Mucosa of descending colon (tissue), 3 donors: ENCODE measurements at regions of chr15 and their contacts with region 1.

Region 1: DNA sequence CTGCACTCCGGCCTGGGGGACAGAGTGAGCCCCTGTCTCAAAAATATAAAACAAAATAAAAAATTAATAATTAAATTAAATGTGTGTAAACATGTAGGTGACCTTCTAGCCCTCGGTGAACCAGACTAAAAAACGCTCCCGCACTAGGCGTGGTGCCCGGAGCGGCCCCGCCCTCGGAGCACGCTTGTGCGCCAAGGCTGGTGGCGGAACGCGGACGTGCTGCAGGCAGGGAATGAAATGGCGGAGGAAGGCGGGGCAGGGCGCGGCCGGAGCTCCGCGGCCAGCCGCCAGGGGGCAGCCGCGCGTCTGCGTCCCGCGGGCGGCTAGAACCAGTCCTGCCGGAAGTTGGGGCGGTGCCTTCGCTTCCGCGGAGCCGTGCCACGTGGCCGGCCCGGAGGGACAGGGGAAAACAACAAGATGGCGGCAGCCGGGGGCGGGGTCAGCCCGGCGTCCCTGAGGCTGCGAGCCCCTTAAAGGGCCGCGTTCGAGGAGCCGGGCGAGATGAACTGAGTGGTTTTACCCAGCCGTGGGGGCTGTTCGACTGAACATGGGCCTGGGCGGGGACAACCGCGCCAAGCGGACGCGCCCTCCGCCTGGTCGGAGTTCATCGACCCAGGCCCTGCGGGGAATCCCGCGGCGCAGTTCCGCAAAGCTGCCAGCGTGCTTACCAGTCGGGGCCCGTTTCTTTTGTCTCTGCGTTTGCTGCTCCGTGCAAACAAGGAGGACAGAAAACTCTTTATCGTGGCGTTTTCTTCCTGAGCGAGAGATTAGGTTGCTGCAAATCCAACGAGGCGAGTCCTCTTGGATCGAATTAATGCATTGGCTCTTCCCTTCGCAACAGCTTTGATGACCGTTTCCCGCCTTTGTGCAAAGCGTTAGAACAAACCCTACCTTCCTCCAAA is 90.9 kb upstream of the CHD2 start:
- DNase-seq: peak; percentile 98 to 99 (median 99)
- ATAC-seq: peak; percentile 88
- H3K4me3 ChIP-seq: peak overlapping the region; percentile 17
- H3K4me1 ChIP-seq: peaks cover 13% of the 10 kb centered on the region
- CTCF ChIP-seq: peak; percentile 98

Region 2: GRCh38 chr15:92586383-92586942 is 222.8 kb before region 1 on chr15:
- intact Hi-C with region 1: no loop called
- DNase-seq: no peak
- ATAC-seq: no peak
- H3K4me3 ChIP-seq: no peak overlapping the region
- H3K4me1 ChIP-seq: no peaks in the 10 kb centered on the region
- CTCF ChIP-seq: no peak

Region 3: DNA sequence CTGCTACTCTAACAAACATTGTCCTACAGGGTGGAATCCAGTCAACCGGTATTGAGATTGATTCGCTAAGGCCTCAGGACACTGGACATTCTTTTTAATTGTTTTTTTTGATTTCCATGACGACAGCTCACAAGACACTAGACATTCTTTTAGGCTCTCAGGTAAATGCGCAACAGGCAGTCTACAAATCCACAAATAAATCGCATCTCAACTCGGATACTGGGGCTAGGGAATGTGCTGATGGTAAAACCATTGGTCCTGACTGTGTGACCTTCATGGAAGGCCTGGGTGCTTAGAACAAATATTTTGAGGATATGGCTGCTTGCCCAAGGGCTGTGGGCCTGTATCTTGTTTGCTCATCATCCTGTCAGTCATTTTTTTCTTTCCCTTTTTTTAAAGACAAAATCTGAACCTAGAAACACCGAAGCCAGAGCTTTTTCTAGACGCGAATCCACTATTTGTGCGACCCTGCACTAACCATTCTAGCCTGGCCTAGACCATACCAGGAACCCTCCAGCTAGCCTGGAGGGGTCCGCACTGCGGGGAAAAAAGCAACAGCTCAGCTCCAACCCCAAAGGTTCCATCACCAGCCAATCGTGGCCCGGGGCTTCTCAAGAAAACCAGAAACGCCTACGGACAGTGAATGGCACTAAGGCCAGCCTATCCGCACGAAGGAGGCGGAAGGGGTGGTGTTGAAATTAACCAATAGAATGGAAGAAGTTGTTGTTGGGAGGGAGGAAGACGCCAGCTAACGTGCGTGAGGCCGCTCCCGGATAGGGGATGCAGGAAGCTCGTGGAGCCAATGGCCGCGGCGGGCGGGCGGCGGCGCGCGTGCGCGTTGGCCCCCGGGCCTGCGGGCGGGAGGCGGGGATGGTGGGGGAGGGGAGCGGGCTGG is 72.8 kb after region 1 on chr15:
- intact Hi-C with region 1: loop called in 1 of 2 experiments (anchors 5 kb)
- DNase-seq: peak; percentile 98 to 99 (median 99)
- ATAC-seq: peak; percentile 92
- H3K4me3 ChIP-seq: no peak overlapping the region
- H3K4me1 ChIP-seq: peaks cover 31% of the 10 kb centered on the region
- CTCF ChIP-seq: no peak

Region 4: DNA sequence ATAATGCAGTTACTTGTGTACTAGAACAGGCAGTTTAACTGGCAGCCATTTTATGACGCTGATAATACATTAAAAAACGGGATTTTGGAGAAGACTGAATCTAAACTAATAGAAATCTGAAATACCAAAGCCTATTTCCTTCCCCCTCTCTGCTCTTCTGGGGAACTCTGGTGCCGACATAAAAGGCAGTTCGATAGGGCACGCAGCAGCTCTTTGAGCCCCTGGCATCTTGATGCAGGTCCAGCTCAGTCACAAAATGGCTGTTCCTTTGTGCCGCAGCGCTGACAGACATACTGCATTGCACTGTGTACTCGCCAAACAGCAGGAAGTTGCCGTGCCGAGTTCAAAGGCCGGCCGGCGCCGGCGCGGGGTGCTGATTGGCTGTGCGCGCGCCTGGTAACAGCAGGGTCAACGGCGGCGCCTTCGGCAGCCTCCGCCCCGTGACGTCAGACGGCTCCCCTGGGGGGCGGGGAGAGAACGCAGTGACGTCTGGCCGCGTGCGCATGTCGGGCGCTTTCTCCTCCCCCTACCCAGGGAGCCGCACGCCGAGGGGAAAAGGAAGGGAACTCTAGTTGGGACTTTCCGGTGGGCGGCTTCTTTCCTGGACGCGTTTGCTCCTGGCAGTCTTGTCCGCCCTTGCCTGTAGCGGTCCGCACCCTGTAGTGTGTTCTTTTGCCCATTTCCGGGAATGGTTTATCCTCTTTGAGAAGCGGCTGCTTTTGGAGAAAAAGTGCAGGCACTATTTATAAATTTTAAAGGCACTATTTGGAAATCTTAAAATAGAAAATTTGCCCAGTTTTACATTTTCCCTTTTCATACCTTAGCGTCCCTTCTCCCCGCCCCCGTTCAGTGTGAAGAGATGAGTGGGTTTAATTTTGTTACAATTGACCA is 95.0 kb after region 1 on chr15:
- intact Hi-C with region 1: loop called in 1 of 2 experiments (anchors 5 kb)
- DNase-seq: peak; percentile 99 to 100 (median 99)
- ATAC-seq: peak; percentile 87
- H3K4me3 ChIP-seq: peak overlapping the region; percentile 12
- H3K4me1 ChIP-seq: peaks cover 37% of the 10 kb centered on the region
- CTCF ChIP-seq: no peak

Region 5: GRCh38 chr15:92917606-92918407 is 108.6 kb after region 1 on chr15:
- intact Hi-C with region 1: loop called in 1 of 2 experiments (anchors 5 kb)
- DNase-seq: peak; percentile 90 to 100 (median 92)
- ATAC-seq: peak; percentile 82
- H3K4me3 ChIP-seq: peak overlapping the region; percentile 15
- H3K4me1 ChIP-seq: peaks cover 72% of the 10 kb centered on the region
- CTCF ChIP-seq: peak; percentile 79